ENCODE measurements at regions of chr1 and their contacts with region 1.

Region 1: GRCh38 chr1:63674238-63674864 is 81.1 kb downstream of the PGM1 start:
- DNase-seq: peak; percentile 73
- ATAC-seq: peak; percentile 98
- H3K4me3 ChIP-seq: no peak overlapping the region
- H3K27ac ChIP-seq: peak overlapping the region; percentile 64; the same call in 1 of the 2 replicates
- H3K4me1 ChIP-seq: 0 out of 2 replicates have a peak, but pooled peaks cover 5% of the 10 kb centered on the region
- H3K27me3 ChIP-seq: no peaks in the 10 kb centered on the region
- CTCF ChIP-seq: peak; percentile 84

Region 2: DNA sequence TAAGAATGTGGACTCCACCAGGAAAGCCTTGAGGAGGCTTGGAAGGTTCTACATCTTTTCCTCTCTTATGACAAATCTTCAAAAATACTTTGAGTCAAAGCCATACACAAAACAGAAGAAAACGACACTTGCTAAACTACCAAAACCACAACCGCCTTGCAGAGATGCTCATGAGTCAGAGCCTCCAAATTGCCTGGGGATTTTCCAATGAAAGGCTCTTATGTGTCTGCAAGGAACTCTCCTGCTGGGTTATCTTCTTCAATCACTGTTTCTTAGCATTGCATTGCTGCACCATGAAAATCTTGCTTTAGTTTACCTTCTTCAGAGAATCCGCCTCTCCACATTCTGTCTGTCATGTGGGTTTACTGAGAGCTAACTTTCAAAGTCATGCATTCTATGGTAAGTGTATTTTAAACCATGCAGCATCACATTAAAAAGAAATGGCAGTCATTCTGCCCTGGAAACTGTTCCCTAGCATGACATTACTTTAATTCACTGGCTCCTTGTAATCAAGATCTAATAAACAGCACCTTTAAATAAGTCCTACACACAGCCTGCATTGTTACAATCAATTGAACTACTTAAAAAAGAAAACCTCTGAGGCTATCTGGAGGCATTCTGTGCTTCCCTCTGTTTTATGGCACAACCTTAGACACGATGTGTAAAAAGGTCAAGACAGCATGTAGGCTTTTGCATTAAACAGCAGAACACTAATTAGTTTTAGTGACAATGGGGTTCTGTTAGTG is 562.0 kb before region 1 on chr1:
- CTCF ChIA-PET with region 1: interaction called, 12 read pairs
- POLR2A ChIA-PET with region 1: no interaction called
- in situ Hi-C with region 1: no loop called
- intact Hi-C with region 1: no loop called
- DNase-seq: no peak
- ATAC-seq: peak; percentile 82
- H3K4me3 ChIP-seq: no peak overlapping the region
- H3K27ac ChIP-seq: no peak overlapping the region
- H3K4me1 ChIP-seq: no peaks in the 10 kb centered on the region
- H3K27me3 ChIP-seq: peaks cover 11% of the 10 kb centered on the region
- CTCF ChIP-seq: no peak

Region 3: GRCh38 chr1:63662056-63662836 is 12.1 kb before region 1 on chr1:
- CTCF ChIA-PET with region 1: interaction called, 3 read pairs
- POLR2A ChIA-PET with region 1: interaction called, 10 read pairs
- in situ Hi-C with region 1: no loop called
- intact Hi-C with region 1: no loop called
- DNase-seq: no peak
- ATAC-seq: peak; percentile 71
- H3K4me3 ChIP-seq: no peak overlapping the region
- H3K27ac ChIP-seq: no peak overlapping the region
- H3K4me1 ChIP-seq: no peaks in the 10 kb centered on the region
- H3K27me3 ChIP-seq: no peaks in the 10 kb centered on the region
- CTCF ChIP-seq: no peak

Measured in Panc1 (cell line).